Psoas muscle (tissue), 8 donors: ENCODE measurements at regions of chr12 and their contacts with region 1.

Region 1: DNA sequence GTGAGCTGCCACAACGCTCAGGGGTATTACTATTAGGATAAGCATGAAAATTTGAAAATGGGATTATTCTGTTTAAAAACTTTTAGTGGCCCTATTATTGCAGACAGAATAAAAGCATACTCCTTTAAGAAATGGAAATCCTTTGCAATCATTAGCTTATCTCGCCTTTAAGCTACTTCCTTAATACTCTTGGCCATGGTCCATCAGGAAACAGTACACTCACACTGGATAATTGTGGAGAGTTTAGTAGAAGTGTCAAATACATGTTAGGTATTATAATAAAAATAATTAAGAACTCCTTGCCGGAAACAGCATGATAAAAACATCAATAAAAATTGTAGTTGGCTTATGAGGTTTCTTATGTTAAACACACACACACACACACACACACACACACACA is 100.4 kb upstream of the PPFIA2 start:
- DNase-seq: no peak
- ATAC-seq: no peak
- H3K4me3 ChIP-seq: no peak overlapping the region
- H3K27ac ChIP-seq: no peak overlapping the region
- H3K4me1 ChIP-seq: no peaks in the 10 kb centered on the region
- H3K27me3 ChIP-seq: no peaks in the 10 kb centered on the region
- CTCF ChIP-seq: no peak

Region 2: GRCh38 chr12:82800185-82800584 is 940.7 kb after region 1 on chr12:
- intact Hi-C with region 1: loop called in 1 of 2 experiments (anchors 5 kb)
- DNase-seq: no peak
- ATAC-seq: no peak
- H3K4me3 ChIP-seq: no peak overlapping the region
- H3K27ac ChIP-seq: no peak overlapping the region
- H3K4me1 ChIP-seq: no peaks in the 10 kb centered on the region
- H3K27me3 ChIP-seq: no peaks in the 10 kb centered on the region
- CTCF ChIP-seq: no peak